HEK293 (cell line): ENCODE measurements at regions of chr11 and their contacts with region 1.

Region 1: GRCh38 chr11:61899146-61899841 is 7.9 kb upstream of the FADS3 start:
- H3K4me3 ChIP-seq: no peak overlapping the region
- H3K27ac ChIP-seq: no peak overlapping the region
- H3K4me1 ChIP-seq: no peaks in the 10 kb centered on the region
- CTCF ChIP-seq: peak; percentile 96

Region 2: DNA sequence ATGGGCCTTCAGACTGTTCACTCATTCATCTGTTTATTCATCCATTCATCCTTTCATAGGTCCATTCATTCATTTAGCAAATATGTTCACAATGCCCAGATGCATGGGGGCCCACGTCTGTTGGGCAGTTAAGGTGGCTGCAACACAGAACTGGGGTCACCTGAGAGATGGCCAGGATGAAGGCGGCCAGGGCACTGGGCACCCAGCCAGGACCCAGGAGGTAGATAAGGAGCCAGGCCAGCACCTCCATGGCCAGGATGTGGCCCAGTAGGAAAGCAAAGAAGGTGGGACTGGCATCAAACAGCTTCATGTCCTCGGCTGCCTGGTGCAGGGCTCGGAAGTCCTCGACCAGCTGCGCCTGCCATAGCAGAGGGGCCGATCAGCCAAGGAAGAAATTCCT is 20.1 kb before region 1 on chr11:
- CTCF ChIA-PET with region 1: interaction called, 24 read pairs
- POLR2A ChIA-PET with region 1: no interaction called
- H3K4me3 ChIP-seq: no peak overlapping the region
- H3K27ac ChIP-seq: no peak overlapping the region
- H3K4me1 ChIP-seq: no peaks in the 10 kb centered on the region
- CTCF ChIP-seq: no peak

Region 3: DNA sequence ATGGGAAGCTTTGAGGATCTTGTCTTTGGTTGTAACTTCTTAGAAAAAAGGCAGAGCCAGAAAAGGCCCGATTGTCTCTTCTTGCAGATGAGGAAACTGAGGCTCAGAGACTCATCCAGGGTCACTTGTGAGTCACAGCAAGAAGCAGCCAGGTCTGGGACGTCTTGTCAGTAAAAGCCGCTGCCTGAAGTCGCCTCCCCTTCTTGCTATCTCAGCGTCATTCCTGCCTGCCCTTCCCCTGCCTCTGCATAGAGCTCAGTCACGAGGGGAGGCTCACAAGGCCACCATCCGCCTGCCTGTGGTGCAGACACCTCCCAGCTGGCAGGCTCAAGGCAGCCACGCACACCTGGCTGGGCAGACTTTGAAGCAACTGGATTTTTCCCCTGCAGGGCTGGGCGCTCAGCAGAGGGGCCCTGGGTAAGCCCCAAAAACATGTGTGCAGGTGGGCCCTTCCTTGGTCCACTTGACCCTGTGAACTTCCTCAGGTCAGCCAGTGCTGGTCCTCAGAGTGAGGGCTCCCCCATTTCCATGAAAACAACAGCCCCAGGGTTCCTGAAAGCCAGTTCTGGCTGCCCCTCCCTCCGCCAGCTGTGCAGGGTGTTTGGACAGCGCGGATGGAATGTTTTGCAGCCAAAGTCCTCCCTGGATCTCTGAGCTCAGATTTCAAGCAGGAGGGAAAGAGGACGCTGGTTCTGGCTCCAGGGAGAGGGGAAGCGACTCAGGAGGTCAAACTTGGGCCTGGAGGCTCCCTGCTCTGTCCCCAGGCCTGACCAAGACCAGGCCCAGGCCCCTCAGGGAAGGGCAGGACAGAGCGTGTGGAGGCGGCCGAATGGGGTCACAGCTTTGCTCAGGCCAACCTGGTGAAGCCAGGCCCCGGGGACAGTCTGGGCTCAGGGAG is 24.1 kb after region 1 on chr11:
- CTCF ChIA-PET with region 1: interaction called, 88 read pairs
- POLR2A ChIA-PET with region 1: interaction called, 3 read pairs
- H3K4me3 ChIP-seq: no peak overlapping the region
- H3K27ac ChIP-seq: no peak overlapping the region
- H3K4me1 ChIP-seq: no peaks in the 10 kb centered on the region
- CTCF ChIP-seq: no peak

Region 4: GRCh38 chr11:61967116-61967923 is 68.0 kb after region 1 on chr11 and contains the start of gene FTH1:
- CTCF ChIA-PET with region 1: interaction called, 12 read pairs
- POLR2A ChIA-PET with region 1: interaction called, 3 read pairs
- H3K4me3 ChIP-seq: peak within 1 kb of the TSS; percentile 82
- H3K27ac ChIP-seq: peak within 1 kb of the TSS; percentile 85
- H3K4me1 ChIP-seq: 0 out of 2 replicates have a peak, but pooled peaks cover 3% of the 10 kb centered on the region
- CTCF ChIP-seq: no peak

Region 5: GRCh38 chr11:62069986-62070919 is 171.0 kb after region 1 on chr11:
- CTCF ChIA-PET with region 1: interaction called, 39 read pairs
- POLR2A ChIA-PET with region 1: no interaction called
- H3K4me3 ChIP-seq: no peak overlapping the region
- H3K27ac ChIP-seq: no peak overlapping the region
- H3K4me1 ChIP-seq: no peaks in the 10 kb centered on the region
- CTCF ChIP-seq: no peak

Region 6: GRCh38 chr11:62108017-62108750 is 208.9 kb after region 1 on chr11:
- CTCF ChIA-PET with region 1: interaction called, 108 read pairs
- POLR2A ChIA-PET with region 1: no interaction called
- H3K4me3 ChIP-seq: no peak overlapping the region
- H3K27ac ChIP-seq: no peak overlapping the region
- H3K4me1 ChIP-seq: no peaks in the 10 kb centered on the region
- CTCF ChIP-seq: peak; percentile 27; the same call in 1 of the 2 replicates